ENCODE measurements at regions of chr14 and their contacts with region 1.

Region 1: GRCh38 chr14:23539248-23540140 is 12.1 kb downstream of the ZFHX2 start:
- DNase-seq: no peak
- H3K4me3 ChIP-seq: no peak overlapping the region
- CTCF ChIP-seq: peak; percentile 64

Region 2: GRCh38 chr14:23366426-23366921 is 173.0 kb before region 1 on chr14:
- CTCF ChIA-PET with region 1: no interaction called
- POLR2A ChIA-PET with region 1: no interaction called
- DNase-seq: no peak
- H3K4me3 ChIP-seq: peak overlapping the region; percentile 74
- CTCF ChIP-seq: no peak

Region 3: DNA sequence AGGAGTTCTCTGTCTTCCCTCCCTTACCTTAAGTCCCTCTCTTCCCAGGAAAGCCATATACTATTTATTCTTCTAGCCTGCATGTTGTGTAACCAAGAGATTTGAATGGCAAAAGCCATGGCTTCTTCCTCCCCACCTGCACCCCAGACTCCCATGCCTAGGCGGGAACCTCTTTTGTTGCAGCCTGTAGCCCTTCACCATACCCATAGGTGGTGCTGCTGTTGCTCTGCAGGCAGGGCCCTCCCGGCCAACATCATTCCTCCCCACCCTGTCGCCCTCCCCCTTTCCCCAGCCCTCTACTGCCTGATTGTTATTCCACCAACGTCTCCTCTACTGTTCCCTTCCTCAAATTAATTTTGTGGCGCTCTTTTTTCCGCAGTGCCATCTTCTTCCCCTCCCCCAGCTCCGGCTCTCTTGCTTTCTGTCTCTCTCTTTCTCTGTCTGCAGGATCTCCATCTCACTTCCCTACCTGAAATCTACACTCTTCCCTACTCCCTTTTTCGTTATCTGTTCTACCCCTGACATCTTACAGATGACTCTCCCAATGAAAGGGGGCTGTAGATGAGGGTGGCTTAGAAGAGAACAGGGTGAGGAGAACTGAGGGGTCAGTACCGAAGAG is 56.1 kb before region 1 on chr14:
- CTCF ChIA-PET with region 1: interaction called, 72 read pairs
- POLR2A ChIA-PET with region 1: no interaction called
- DNase-seq: no peak
- H3K4me3 ChIP-seq: no peak overlapping the region
- CTCF ChIP-seq: peak; percentile 58

Region 4: DNA sequence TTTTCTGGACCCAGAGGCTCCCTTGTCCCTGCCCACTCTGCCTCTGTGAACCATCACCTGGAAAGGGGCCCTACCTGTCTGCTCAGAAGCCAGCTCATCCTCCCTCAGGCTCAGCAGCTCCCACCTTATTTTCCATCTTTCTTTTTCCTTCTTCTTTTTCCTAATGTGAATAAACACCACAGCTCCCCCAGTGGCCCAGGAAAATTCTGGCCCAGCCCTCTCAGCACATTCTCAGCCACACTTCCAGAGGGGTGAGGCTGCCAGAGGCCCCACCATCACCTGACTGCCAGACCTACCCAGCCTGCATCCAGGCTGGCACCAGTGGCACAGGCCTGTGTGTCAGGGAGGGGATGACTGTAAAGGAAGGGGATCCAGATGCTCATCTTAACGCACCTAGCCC is 10.9 kb before region 1 on chr14:
- CTCF ChIA-PET with region 1: interaction called, 39 read pairs
- POLR2A ChIA-PET with region 1: no interaction called
- DNase-seq: no peak
- H3K4me3 ChIP-seq: no peak overlapping the region
- CTCF ChIP-seq: no peak

Measured in AG04449 (cell line).